Activated B cell treated with CpG ODN at 0.5 μM for 24 hours (primary cell): ENCODE measurements at regions of chr17 and their contacts with region 1.

Region 1: DNA sequence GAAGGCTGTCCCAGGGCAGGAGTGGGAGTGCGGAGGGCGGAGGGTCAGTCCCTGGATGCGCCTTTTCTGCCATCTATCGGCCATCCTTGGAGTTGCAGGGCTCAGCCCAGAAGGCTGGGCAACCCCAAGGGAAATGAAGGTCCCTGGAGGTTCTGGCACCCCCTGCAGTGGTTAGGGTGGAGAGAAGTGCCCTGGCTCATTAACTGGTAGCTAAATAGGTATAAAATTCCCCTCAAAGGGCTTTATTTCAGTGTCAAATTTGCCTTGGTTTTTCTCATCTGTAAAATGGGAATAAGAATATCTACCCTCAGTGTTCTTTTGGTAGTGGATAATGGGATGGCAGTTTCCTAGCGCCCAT is 22.4 kb downstream of the C17orf75 start:
- DNase-seq: peak; percentile 85
- ATAC-seq: peak; percentile 99
- H3K4me3 Mint-ChIP-seq: peak overlapping the region; percentile 84
- H3K27ac Mint-ChIP-seq: peak overlapping the region; percentile 80
- H3K4me1 Mint-ChIP-seq: peaks cover 31% of the 10 kb centered on the region
- H3K27me3 Mint-ChIP-seq: no peaks in the 10 kb centered on the region
- CTCF ChIP-seq: peak; percentile 62

Region 2: DNA sequence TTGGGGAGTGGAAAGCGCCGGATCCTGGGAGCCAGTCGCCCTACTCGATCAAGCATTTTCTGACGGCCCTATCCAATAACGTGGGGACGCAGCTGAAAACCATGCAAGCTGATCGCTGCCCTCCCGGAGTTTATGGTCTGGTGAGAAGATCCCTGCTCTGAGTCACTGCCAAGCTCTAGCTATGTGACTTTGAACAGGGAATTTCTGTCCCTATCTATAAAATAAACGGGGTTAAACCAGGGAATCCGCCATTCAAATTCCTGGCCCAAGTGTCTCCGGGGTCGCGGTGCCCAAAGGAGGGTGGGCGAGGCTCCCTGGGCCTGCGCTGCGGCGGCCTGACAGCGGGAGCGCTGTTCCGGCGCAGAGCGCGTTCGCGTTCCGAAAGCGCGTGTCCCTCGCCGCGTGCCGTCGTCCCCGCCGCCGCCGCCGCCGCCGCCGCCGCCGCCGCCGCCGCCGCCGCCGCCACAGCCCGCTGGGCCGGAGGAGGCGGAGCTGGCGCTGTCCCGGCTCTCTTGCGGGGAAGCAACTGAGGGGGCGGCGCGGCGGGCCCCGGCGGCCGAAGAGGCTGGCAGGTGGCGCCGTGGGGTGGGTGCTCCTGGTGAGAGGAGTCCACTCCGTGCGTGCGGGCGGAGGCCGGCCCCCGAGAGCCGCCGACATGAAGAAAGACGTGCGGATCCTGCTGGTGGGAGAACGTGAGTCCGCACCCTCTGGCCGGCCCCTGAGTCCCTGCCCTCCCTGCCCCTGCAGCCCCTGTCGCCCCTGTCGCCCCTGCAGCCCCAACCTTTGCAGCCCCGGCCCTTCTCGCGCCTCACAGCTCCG is 177.3 kb before region 1 on chr17 and contains the start of gene RHOT1:
- CTCF ChIA-PET with region 1: interaction called, 3 read pairs
- POLR2A ChIA-PET with region 1: no interaction called
- intact Hi-C with region 1: loop called (anchors 5 kb)
- DNase-seq: peak; percentile 79
- ATAC-seq: peak; percentile 82
- H3K4me3 Mint-ChIP-seq: peak within 1 kb of the TSS; percentile 98
- H3K27ac Mint-ChIP-seq: peak within 1 kb of the TSS; percentile 85
- H3K4me1 Mint-ChIP-seq: peaks cover 23% of the 10 kb centered on the region
- H3K27me3 Mint-ChIP-seq: no peaks in the 10 kb centered on the region
- CTCF ChIP-seq: no peak
- total RNA-seq, gene RHOT1: 14.8 and 16.2 TPM in 2 replicates

Region 3: GRCh38 chr17:32253117-32253611 is 66.4 kb before region 1 on chr17:
- CTCF ChIA-PET with region 1: interaction called, 17 read pairs
- POLR2A ChIA-PET with region 1: interaction called, 4 read pairs
- intact Hi-C with region 1: loop called (anchors 1 kb)
- DNase-seq: peak; percentile 58
- ATAC-seq: peak; percentile 99
- H3K4me3 Mint-ChIP-seq: no peak overlapping the region
- H3K27ac Mint-ChIP-seq: no peak overlapping the region
- H3K4me1 Mint-ChIP-seq: peaks cover 4% of the 10 kb centered on the region
- H3K27me3 Mint-ChIP-seq: peaks cover 10% of the 10 kb centered on the region
- CTCF ChIP-seq: peak; percentile 32

Region 4: DNA sequence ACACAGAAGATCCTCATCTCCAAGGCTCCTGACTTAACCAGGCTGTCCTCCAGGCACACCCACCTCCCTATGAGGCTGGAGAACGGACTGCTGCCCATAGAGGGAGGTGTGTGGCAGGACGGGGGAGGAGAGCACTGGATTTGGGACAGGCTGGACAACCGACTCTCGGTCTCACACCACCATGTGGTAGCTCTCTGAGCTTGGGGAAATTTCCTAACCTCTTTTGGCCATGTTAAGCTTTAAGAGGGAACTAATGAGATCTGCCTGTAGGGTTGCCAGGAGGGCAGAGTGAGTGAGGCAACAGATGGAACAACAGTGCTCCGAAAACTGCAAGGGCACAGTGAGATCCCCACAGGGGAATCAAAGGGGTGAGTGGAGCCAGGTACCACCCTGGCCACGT is 21.2 kb before region 1 on chr17:
- CTCF ChIA-PET with region 1: no interaction called
- POLR2A ChIA-PET with region 1: no interaction called
- intact Hi-C with region 1: no loop called
- DNase-seq: no peak
- ATAC-seq: no peak
- H3K4me3 Mint-ChIP-seq: no peak overlapping the region
- H3K27ac Mint-ChIP-seq: no peak overlapping the region
- H3K4me1 Mint-ChIP-seq: no peaks in the 10 kb centered on the region
- H3K27me3 Mint-ChIP-seq: no peaks in the 10 kb centered on the region
- CTCF ChIP-seq: no peak

Region 5: GRCh38 chr17:32341857-32342602 is 22.5 kb after region 1 on chr17 and contains the start of gene C17orf75:
- CTCF ChIA-PET with region 1: no interaction called
- POLR2A ChIA-PET with region 1: interaction called, 20 read pairs
- intact Hi-C with region 1: loop called (anchors 1 kb)
- DNase-seq: peak; percentile 72
- ATAC-seq: peak; percentile 87
- H3K4me3 Mint-ChIP-seq: peak within 1 kb of the TSS; percentile 93
- H3K27ac Mint-ChIP-seq: peak within 1 kb of the TSS; percentile 96
- H3K4me1 Mint-ChIP-seq: peaks cover 24% of the 10 kb centered on the region
- H3K27me3 Mint-ChIP-seq: no peaks in the 10 kb centered on the region
- CTCF ChIP-seq: no peak
- total RNA-seq, gene C17orf75: 18.1 and 23.0 TPM in 2 replicates

Region 6: DNA sequence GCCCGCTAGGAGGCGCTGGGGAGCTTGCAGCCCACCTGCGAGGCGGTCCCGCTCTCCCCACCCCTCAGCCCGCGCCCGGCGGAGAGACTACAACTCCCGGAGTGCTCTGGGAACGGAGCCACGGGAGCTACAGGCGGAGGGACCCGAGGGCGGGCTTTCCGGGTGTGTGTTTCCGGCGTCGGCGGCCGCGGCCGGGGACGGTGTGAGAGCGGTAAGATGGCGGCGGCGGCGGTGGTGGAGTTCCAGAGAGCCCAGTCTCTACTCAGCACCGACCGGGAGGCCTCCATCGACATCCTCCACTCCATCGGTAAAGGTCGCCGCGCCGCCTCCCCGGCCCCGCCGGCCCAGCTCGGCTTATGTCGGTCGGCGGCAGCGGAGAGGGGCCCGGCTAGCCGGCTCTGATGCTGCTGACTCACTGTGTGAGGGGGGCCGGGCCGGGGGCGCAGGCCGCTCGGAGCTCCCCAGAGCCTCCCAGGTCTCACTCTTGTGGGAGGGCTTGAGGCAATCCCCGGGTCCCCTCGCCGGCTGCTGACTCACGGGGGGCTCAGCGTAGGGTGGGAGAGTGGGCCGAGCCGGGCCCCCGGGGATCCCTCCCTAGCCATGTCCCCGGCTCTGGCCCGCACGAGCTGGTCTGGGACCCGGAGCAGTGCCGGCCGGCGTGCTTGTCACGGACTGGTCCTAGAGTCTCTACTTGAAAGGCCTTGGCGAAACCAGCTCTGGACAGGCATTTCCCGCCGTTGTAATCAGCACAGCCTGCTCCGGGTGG is 125.0 kb after region 1 on chr17 and contains the start of gene PSMD11:
- CTCF ChIA-PET with region 1: interaction called, 5 read pairs
- POLR2A ChIA-PET with region 1: interaction called, 5 read pairs
- intact Hi-C with region 1: loop called (anchors 1 kb)
- DNase-seq: peak; percentile 99
- ATAC-seq: peak; percentile 97
- H3K4me3 Mint-ChIP-seq: peak within 1 kb of the TSS; percentile 89
- H3K27ac Mint-ChIP-seq: peak within 1 kb of the TSS; percentile 65
- H3K4me1 Mint-ChIP-seq: peaks cover 28% of the 10 kb centered on the region
- H3K27me3 Mint-ChIP-seq: no peaks in the 10 kb centered on the region
- CTCF ChIP-seq: no peak
- total RNA-seq, gene PSMD11: 115 and 117 TPM in 2 replicates